ENCODE measurements at regions of chr11 and their contacts with region 1.

Region 1: DNA sequence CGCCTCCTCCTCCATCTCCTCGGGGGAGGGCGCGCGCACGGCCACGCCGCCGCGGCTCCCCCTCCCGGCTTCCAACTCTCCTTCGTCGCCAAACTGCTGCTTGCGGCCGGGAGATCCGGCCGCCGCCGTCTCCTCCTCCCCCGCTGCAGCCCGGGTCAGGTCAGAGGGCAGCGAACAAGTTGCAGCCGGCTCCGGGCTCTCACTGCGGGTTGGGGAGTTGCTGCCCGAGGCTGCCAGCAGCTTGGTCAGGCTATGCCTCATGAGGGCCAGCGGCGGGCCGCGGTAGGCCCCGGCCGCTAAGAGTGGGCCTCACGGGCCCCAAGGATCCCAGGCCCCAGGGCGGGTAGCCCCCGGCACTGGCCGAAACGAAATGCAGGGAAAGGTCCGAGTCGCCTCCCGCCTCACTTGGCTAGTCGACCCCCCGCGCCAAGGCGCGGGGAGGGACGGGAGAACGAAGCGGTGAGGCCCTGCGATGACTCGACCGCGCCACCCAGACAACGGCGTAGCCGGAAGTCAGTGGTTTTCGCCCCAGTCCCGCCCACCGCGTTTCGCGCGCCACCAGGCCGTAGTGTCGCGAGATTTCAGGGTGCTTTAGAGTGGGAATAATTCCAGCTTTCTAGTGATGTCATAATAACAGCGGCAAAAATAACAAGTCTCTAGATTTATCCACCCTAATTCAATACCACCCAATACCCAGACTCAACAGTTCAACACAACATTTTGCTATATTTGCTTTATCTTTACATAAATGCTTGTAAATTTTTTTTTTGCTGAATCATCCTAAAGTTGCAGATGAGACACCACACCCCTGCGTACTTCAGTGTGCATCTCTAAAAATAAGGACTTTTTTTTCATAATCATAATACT is at the start of gene CREBZF:
- DNase-seq: peak; percentile 84 to 96 (median 94)
- ATAC-seq: peak; percentile 61
- H3K4me3 ChIP-seq: peak within 1 kb of the TSS; percentile 78 to 94
- H3K4me3 Mint-ChIP-seq: peak within 1 kb of the TSS; percentile 100
- H3K27ac ChIP-seq: peak within 1 kb of the TSS; percentile 96 to 97
- H3K27ac Mint-ChIP-seq: peak within 1 kb of the TSS; percentile 100
- H3K4me1 ChIP-seq: peaks cover 38% of the 10 kb centered on the region
- H3K4me1 Mint-ChIP-seq: peaks cover 43% of the 10 kb centered on the region
- H3K27me3 ChIP-seq: no peaks in the 10 kb centered on the region
- H3K27me3 Mint-ChIP-seq: no peaks in the 10 kb centered on the region
- CTCF ChIP-seq: no peak
- total RNA-seq, gene CREBZF: 32.2 to 33.3 TPM

Region 2: GRCh38 chr11:85187992-85188391 is 476.9 kb before region 1 on chr11:
- CTCF ChIA-PET with region 1: no interaction called
- POLR2A ChIA-PET with region 1: no interaction called
- intact Hi-C with region 1: no loop called
- DNase-seq: no peak
- ATAC-seq: no peak
- H3K4me3 ChIP-seq: no peak overlapping the region
- H3K4me3 Mint-ChIP-seq: no peak overlapping the region
- H3K27ac ChIP-seq: no peak overlapping the region
- H3K27ac Mint-ChIP-seq: no peak overlapping the region
- H3K4me1 ChIP-seq: no peaks in the 10 kb centered on the region
- H3K4me1 Mint-ChIP-seq: no peaks in the 10 kb centered on the region
- H3K27me3 ChIP-seq: no peaks in the 10 kb centered on the region
- H3K27me3 Mint-ChIP-seq: no peaks in the 10 kb centered on the region
- CTCF ChIP-seq: no peak

Region 3: GRCh38 chr11:85472953-85473352 is 191.9 kb before region 1 on chr11:
- CTCF ChIA-PET with region 1: no interaction called
- POLR2A ChIA-PET with region 1: no interaction called
- intact Hi-C with region 1: no loop called
- DNase-seq: no peak
- ATAC-seq: no peak
- H3K4me3 ChIP-seq: no peak overlapping the region
- H3K4me3 Mint-ChIP-seq: no peak overlapping the region
- H3K27ac ChIP-seq: no peak overlapping the region
- H3K27ac Mint-ChIP-seq: no peak overlapping the region
- H3K4me1 ChIP-seq: no peaks in the 10 kb centered on the region
- H3K4me1 Mint-ChIP-seq: no peaks in the 10 kb centered on the region
- H3K27me3 ChIP-seq: no peaks in the 10 kb centered on the region
- H3K27me3 Mint-ChIP-seq: no peaks in the 10 kb centered on the region
- CTCF ChIP-seq: no peak

Region 4: DNA sequence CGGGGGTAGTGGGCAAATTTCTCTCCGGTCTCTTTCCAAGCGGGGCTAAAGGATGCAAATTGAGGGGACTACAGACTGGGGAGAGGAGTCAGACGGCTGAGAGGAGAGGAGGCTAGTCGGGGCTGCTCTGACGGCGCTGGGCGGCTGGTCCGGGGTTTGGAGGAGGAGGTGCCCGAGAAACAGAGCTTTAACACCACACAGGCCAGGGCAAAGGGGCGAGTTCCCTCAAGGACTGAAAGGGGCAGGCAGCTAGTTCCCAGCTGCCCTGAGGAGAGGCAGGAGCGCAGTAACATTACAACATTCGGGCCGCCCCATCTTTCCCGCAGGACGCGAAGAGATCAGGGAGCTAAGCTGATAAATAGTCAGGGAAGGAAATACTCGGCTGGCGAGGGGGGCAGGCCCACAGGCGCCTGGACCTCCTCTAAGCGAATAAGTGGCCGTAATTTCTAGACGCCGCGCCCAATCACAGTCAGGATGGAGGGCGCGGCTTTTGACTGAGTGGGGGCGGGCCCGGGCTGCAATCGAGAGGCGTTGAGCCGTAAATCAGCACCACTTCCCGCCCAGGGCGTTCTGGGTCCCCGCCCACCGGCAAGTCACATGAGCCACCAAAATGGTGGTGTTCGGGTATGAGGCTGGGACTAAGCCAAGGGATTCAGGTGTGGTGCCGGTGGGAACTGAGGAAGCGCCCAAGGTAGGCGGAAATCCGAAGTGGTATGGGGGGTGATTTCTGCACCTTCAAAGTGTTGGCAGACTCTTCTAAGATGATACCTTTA is 36.7 kb before region 1 on chr11 and contains the start of gene TMEM126B:
- CTCF ChIA-PET with region 1: interaction called, 5 read pairs
- POLR2A ChIA-PET with region 1: interaction called, 30 read pairs
- intact Hi-C with region 1: loop called (anchors 1 kb)
- DNase-seq: peak; percentile 89 to 97 (median 96)
- ATAC-seq: peak; percentile 97
- H3K4me3 ChIP-seq: peak within 1 kb of the TSS; percentile 80 to 91
- H3K4me3 Mint-ChIP-seq: peak within 1 kb of the TSS; percentile 91
- H3K27ac ChIP-seq: peak within 1 kb of the TSS; percentile 76 to 83
- H3K27ac Mint-ChIP-seq: peak within 1 kb of the TSS; percentile 96
- H3K4me1 ChIP-seq: peaks cover 14% of the 10 kb centered on the region
- H3K4me1 Mint-ChIP-seq: peaks cover 51% of the 10 kb centered on the region
- H3K27me3 ChIP-seq: peaks cover 0 to 1% of the 10 kb centered on the region in 2 experiments
- H3K27me3 Mint-ChIP-seq: no peaks in the 10 kb centered on the region
- CTCF ChIP-seq: no peak
- total RNA-seq, gene TMEM126B: 16.2 to 19.9 TPM

Region 5: GRCh38 chr11:85682330-85683305 is 17.8 kb after region 1 on chr11:
- CTCF ChIA-PET with region 1: interaction called, 3 read pairs
- POLR2A ChIA-PET with region 1: interaction called, 5 read pairs
- intact Hi-C with region 1: loop called in 1 of 2 experiments (anchors 1 kb)
- DNase-seq: peak; percentile 33 to 80 (median 64)
- ATAC-seq: peak; percentile 81
- H3K4me3 ChIP-seq: peak overlapping the region; percentile 67 to 73
- H3K4me3 Mint-ChIP-seq: peak overlapping the region; percentile 84
- H3K27ac ChIP-seq: peak overlapping the region; percentile 2 to 41
- H3K27ac Mint-ChIP-seq: peak overlapping the region; percentile 79
- H3K4me1 ChIP-seq: no peaks in the 10 kb centered on the region
- H3K4me1 Mint-ChIP-seq: peaks cover 8% of the 10 kb centered on the region
- H3K27me3 ChIP-seq: no peaks in the 10 kb centered on the region
- H3K27me3 Mint-ChIP-seq: no peaks in the 10 kb centered on the region
- CTCF ChIP-seq: no peak

Region 6: GRCh38 chr11:85826116-85826855 is 161.4 kb after region 1 on chr11:
- CTCF ChIA-PET with region 1: no interaction called
- POLR2A ChIA-PET with region 1: interaction called, 3 read pairs
- intact Hi-C with region 1: loop called in 1 of 2 experiments (anchors 1 kb)
- DNase-seq: peak in 4 of 9 experiments; percentile 17 to 46 (median 30)
- ATAC-seq: no peak
- H3K4me3 ChIP-seq: no peak overlapping the region
- H3K4me3 Mint-ChIP-seq: peak overlapping the region; percentile 12
- H3K27ac ChIP-seq: no peak overlapping the region
- H3K27ac Mint-ChIP-seq: peak overlapping the region; percentile 92
- H3K4me1 ChIP-seq: peaks cover 63% of the 10 kb centered on the region
- H3K4me1 Mint-ChIP-seq: peaks cover 66% of the 10 kb centered on the region
- H3K27me3 ChIP-seq: no peaks in the 10 kb centered on the region
- H3K27me3 Mint-ChIP-seq: no peaks in the 10 kb centered on the region
- CTCF ChIP-seq: peak; percentile 17

Region 7: DNA sequence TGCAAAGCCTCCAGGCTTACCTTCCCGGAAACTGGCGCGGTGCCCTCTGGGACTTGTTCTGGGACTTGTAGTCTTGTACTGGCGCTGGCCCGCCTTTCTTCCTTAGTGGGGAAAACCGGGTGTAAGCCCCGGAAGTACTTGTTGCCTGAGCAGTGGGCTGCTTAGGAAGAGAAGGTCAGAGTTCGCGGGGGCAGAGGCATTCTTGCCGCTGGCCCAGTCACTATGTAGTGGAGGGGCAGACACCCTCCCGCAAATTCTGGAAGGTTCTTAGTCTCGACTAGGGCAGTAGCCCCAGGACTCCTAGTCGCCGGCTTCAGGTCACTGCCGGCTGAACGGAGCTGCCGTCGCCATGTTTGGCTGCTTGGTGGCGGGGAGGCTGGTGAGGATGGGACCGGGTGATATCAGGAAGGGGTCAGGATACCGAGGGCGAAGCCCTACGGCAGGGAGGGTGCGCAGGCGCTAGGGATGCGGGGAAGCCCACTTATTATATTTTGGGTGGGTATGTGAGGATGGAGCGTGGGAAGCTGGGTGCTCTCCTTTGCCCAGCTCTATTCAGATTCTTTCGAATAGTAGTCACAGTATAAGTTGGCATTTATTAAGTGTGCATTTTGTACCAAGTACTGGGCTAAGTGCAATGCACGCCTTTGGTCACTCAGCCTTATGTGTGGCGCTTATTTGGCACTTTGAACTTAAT is 637.4 kb after region 1 on chr11 and contains the start of gene HIKESHI:
- CTCF ChIA-PET with region 1: no interaction called
- POLR2A ChIA-PET with region 1: no interaction called
- intact Hi-C with region 1: loop called (anchors 2 to 5 kb)
- DNase-seq: peak; percentile 74 to 96 (median 93)
- ATAC-seq: peak; percentile 98
- H3K4me3 ChIP-seq: peak within 1 kb of the TSS; percentile 73 to 86
- H3K4me3 Mint-ChIP-seq: peak within 1 kb of the TSS; percentile 99
- H3K27ac ChIP-seq: peak within 1 kb of the TSS; percentile 74 to 76
- H3K27ac Mint-ChIP-seq: peak within 1 kb of the TSS; percentile 99
- H3K4me1 ChIP-seq: peaks cover 22% of the 10 kb centered on the region
- H3K4me1 Mint-ChIP-seq: peaks cover 29% of the 10 kb centered on the region
- H3K27me3 ChIP-seq: no peaks in the 10 kb centered on the region
- H3K27me3 Mint-ChIP-seq: no peaks in the 10 kb centered on the region
- CTCF ChIP-seq: no peak
- total RNA-seq, gene HIKESHI: 4.9 to 6.9 TPM